ENCODE measurements at regions of chr14 and their contacts with region 1.

Region 1: DNA sequence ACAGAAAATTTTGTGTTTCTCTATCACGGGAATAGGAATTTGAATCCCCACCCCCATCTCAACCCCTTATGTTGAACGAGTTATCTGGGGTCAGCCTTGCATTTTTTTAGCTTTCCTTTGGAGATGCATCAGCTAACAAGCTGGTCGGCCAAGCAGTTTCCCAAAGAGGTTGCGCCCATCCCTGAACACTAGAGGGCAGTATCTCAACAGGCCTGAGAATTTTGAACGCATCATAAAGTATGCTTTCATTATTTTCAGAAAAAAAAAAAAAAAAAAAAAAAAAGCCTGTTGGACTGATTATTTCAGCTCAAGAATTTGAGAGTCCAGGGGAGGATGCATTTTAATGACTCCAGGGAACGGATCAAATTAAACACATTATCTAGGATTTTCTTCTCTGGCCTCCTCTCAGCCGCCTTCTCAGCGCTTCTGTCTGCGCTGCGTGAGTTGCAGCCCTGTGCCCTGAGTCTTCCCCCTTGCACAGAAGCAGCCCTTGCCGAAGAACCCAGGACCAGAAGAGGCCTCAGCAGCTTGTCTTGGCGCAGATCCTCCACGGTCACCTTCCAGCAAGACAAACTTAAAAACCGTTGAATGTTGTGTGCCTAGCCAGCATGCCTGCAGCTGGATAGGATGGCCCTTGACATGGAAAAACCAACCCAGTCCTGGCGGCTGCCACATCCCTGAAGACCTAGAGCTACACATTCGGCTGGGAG is 76.6 kb upstream of the GZMB start:
- DNase-seq: peak; percentile 59
- ATAC-seq: peak; percentile 92
- H3K4me3 ChIP-seq: no peak overlapping the region
- H3K27ac ChIP-seq: no peak overlapping the region
- H3K4me1 ChIP-seq: no peaks in the 10 kb centered on the region
- H3K27me3 ChIP-seq: no peaks in the 10 kb centered on the region
- CTCF ChIP-seq: peak; percentile 83
- POLR2A ChIP-seq: no peak
- RAD21 ChIP-seq: peak; percentile 78

Region 2: DNA sequence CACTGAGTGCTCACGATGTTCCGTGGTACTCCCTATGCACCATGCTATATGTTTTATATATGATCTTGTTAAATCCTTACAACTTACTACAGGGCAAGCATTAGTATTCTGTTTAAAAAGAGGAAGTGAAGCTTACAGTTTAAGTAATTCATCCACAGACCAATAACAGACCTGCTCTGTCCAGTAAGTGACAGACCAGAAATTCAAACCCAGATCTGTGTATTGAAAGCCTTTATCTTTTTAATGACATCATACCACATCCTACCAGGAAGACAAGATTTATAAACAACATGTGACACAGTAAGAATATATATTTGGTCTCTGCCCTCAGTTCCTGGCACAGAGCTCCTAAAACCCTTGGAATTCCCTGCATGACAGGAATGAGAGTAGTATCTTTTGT is 132.9 kb after region 1 on chr14:
- CTCF ChIA-PET with region 1: interaction called, 12 read pairs
- POLR2A ChIA-PET with region 1: no interaction called
- dilution Hi-C with region 1: no loop called
- in situ Hi-C with region 1: no loop called
- intact Hi-C with region 1: no loop called
- DNase-seq: no peak
- ATAC-seq: no peak
- H3K4me3 ChIP-seq: no peak overlapping the region
- H3K27ac ChIP-seq: no peak overlapping the region
- H3K4me1 ChIP-seq: 0 out of 2 replicates have a peak, but pooled peaks cover 1% of the 10 kb centered on the region
- H3K27me3 ChIP-seq: no peaks in the 10 kb centered on the region
- CTCF ChIP-seq: no peak
- POLR2A ChIP-seq: no peak
- RAD21 ChIP-seq: no peak

Region 3: DNA sequence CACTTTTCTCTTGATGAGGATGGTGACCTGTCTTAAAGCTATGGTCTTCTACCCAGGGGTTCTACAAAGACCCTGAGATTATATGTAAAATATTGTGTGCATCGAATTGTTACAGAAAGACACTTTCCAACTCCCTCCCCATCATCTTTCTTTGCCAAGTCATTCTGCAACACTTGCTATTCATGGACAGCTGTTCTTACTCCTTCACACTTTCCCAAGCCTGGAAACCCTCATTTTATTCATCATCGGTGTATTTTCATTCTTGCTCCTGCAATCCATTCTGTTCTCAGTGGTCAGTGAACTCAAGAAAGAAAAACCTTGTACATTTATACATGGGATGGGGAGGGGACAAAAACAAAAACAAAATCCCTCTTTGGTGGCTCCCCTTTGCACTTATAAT is 429.9 kb after region 1 on chr14:
- CTCF ChIA-PET with region 1: interaction called, 5 read pairs
- POLR2A ChIA-PET with region 1: no interaction called
- dilution Hi-C with region 1: no loop called
- in situ Hi-C with region 1: no loop called
- intact Hi-C with region 1: loop called (anchors 5 kb)
- DNase-seq: no peak
- ATAC-seq: no peak
- H3K4me3 ChIP-seq: no peak overlapping the region
- H3K27ac ChIP-seq: no peak overlapping the region
- H3K4me1 ChIP-seq: no peaks in the 10 kb centered on the region
- H3K27me3 ChIP-seq: peaks cover 2% of the 10 kb centered on the region
- CTCF ChIP-seq: no peak
- POLR2A ChIP-seq: no peak
- RAD21 ChIP-seq: no peak

Region 4: DNA sequence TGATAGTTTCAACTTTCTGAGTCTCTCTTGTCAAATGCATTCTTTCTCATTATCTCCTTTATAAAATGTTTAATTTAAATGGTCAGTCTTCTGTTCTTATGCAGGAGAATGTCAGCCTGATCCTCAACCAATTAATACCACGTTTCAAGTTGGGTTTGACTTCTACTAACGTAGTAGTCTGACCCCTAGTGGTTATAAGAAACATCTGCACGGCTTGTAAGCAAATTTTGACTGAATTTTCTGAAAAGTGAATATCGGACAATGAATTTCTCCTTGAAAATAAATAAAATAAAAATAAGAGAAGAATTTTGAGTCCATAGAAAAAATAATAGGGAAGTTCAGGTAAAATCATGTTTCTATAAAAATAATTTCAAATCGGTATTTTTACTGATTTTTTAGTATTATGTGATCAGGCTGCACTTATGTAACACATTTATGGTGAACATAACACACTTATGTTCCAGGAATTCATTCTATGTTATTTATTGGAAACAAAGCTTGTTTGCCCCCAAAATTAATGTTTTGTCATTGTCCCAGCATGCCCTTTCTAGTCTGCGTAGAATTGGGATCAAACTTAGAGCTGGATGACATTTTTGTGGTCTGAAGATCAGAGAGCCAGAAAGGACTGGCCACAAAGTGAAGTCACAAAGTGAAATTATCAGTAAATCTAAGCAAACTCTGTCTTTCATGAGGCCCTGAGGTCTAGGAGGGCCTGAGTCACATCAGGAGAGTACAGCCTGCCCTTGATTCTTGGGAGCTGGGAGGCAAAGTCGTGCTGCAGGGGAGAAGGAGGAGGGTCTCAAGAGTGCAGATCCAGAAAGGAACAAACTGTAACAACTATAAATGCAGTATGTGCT is 440.6 kb after region 1 on chr14:
- CTCF ChIA-PET with region 1: interaction called, 6 read pairs
- POLR2A ChIA-PET with region 1: no interaction called
- dilution Hi-C with region 1: no loop called
- in situ Hi-C with region 1: no loop called
- intact Hi-C with region 1: loop called (anchors 1 kb)
- DNase-seq: peak; percentile 71
- ATAC-seq: peak; percentile 82
- H3K4me3 ChIP-seq: no peak overlapping the region
- H3K27ac ChIP-seq: no peak overlapping the region
- H3K4me1 ChIP-seq: no peaks in the 10 kb centered on the region
- H3K27me3 ChIP-seq: peaks cover 1% of the 10 kb centered on the region
- CTCF ChIP-seq: peak; percentile 78
- POLR2A ChIP-seq: no peak
- RAD21 ChIP-seq: peak; percentile 76

Region 5: DNA sequence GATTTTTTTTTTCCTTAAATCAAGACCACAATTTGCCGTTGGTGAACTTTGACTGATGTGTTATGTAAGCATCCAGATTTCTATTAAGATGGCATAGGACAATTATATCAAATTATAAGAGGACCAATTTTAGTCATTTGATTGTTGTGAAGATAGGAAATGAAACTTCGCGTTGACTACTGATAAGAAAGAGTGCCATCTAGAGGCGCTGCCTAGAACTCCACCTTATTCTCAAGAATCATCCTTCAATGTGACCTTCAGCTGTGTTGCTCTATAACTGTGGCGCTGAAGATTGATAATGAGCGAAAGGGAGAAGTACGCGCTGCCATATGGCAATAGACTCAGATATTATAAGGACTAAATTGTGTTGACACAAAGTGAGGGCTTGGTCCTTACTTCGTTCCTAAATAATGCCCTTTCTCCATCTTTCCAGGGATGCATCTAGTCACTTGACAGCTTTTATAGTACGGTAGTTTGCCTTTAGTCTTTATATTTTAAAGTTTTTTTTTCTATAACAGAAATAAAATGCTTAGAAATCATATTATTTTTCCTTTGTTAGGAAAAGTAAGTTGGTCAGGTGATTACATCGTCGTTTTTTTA is 690.1 kb after region 1 on chr14:
- CTCF ChIA-PET with region 1: interaction called, 3 read pairs
- POLR2A ChIA-PET with region 1: interaction called, 6 read pairs
- dilution Hi-C with region 1: no loop called
- in situ Hi-C with region 1: no loop called
- intact Hi-C with region 1: loop called (anchors 1 kb)
- DNase-seq: peak; percentile 29
- ATAC-seq: peak; percentile 57; the same call in 1 of the 2 replicates
- H3K4me3 ChIP-seq: no peak overlapping the region
- H3K27ac ChIP-seq: no peak overlapping the region
- H3K4me1 ChIP-seq: no peaks in the 10 kb centered on the region
- H3K27me3 ChIP-seq: no peaks in the 10 kb centered on the region
- CTCF ChIP-seq: peak; percentile 69
- POLR2A ChIP-seq: no peak
- RAD21 ChIP-seq: peak; percentile 52